IMR-90 (cell line): ENCODE measurements at regions of chr4 and their contacts with region 1.

Region 1: DNA sequence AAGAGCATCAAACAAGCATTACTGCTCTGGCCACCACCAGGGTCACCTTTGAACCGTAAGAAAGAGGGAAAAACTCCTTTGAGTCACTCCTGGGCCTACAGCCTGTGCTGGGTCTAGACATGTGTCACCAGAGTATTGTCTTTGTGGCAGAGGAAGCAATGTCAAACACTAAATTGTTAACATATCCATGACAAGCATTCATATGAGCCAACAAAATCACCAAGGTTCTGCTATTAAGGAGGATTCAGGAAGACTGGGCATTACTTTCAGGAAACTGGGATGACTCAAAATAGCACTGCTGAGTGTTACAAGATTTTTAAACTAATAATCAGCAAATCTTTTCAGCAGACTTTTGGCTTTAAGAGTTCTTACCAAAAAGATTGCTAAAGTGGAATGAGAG is 28.1 kb downstream of the LGI2 start:
- DNase-seq: no peak
- ATAC-seq: no peak
- H3K4me3 ChIP-seq: no peak overlapping the region
- H3K27ac ChIP-seq: no peak overlapping the region
- H3K4me1 ChIP-seq: no peaks in the 10 kb centered on the region
- H3K27me3 ChIP-seq: peaks cover 14% of the 10 kb centered on the region
- CTCF ChIP-seq: no peak
- POLR2A ChIP-seq: no peak
- RAD21 ChIP-seq: no peak

Region 2: GRCh38 chr4:25030277-25031076 is 27.8 kb after region 1 on chr4 and contains the start of gene LGI2:
- CTCF ChIA-PET with region 1: no interaction called
- POLR2A ChIA-PET with region 1: no interaction called
- dilution Hi-C with region 1: no loop called
- in situ Hi-C with region 1: no loop called
- intact Hi-C with region 1: loop called (anchors 1 kb)
- DNase-seq: no peak
- ATAC-seq: peak; percentile 86
- H3K4me3 ChIP-seq: peak within 1 kb of the TSS; percentile 31; the same call in 1 of the 2 replicates
- H3K27ac ChIP-seq: no peak within 1 kb of the TSS
- H3K4me1 ChIP-seq: no peaks in the 10 kb centered on the region
- H3K27me3 ChIP-seq: peaks cover 57% of the 10 kb centered on the region
- CTCF ChIP-seq: no peak
- POLR2A ChIP-seq: no peak
- RAD21 ChIP-seq: no peak
- total RNA-seq, gene LGI2: not detected in 2 replicates

Region 3: DNA sequence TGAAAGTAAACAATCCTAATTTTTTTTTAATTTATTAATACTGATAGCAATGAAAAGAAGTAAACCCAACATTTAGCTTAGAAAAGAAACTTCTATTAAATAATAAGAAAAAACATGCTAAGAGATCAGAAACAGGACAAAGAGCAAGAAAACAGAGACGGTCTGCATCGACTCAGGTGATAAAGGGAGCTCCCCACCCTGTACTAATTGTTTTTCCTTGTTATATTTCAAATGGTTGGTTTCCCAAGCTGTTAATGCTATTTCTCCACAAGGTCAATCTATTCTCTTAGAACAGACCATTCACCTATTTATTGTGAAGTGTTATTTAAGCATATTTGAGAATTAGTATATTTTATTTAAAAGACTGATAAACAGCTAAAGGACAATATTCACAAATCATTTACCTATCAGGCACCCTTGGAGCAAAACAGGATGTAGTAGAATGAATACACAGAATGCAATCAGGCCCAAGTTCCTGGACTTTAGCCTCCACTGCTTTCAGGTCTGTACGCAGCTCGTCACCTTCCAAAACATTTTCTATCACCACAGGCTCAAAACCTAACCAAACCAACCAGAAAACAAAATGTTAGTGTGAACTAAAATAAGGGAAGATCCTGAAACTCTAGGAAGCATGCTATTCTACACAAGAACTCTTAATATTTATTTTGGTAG is 152.0 kb after region 1 on chr4:
- CTCF ChIA-PET with region 1: no interaction called
- POLR2A ChIA-PET with region 1: no interaction called
- dilution Hi-C with region 1: no loop called
- in situ Hi-C with region 1: no loop called
- intact Hi-C with region 1: no loop called
- DNase-seq: no peak
- ATAC-seq: no peak
- H3K4me3 ChIP-seq: no peak overlapping the region
- H3K27ac ChIP-seq: no peak overlapping the region
- H3K4me1 ChIP-seq: no peaks in the 10 kb centered on the region
- H3K27me3 ChIP-seq: no peaks in the 10 kb centered on the region
- CTCF ChIP-seq: no peak
- POLR2A ChIP-seq: no peak
- RAD21 ChIP-seq: no peak